WTC11 (cell line): ENCODE measurements at regions of chr14 and their contacts with region 1.

Region 1: GRCh38 chr14:93115069-93115820 is 480 bp downstream of the ITPK1 start:
- DNase-seq: peak; percentile 75
- ATAC-seq: peak; percentile 73
- H3K4me3 Mint-ChIP-seq: peak overlapping the region; percentile 86
- H3K27ac Mint-ChIP-seq: no peak overlapping the region
- H3K4me1 Mint-ChIP-seq: peaks cover 40% of the 10 kb centered on the region
- H3K27me3 Mint-ChIP-seq: no peaks in the 10 kb centered on the region; the same call in 1 of the 2 replicates
- CTCF ChIP-seq: no peak

Region 2: DNA sequence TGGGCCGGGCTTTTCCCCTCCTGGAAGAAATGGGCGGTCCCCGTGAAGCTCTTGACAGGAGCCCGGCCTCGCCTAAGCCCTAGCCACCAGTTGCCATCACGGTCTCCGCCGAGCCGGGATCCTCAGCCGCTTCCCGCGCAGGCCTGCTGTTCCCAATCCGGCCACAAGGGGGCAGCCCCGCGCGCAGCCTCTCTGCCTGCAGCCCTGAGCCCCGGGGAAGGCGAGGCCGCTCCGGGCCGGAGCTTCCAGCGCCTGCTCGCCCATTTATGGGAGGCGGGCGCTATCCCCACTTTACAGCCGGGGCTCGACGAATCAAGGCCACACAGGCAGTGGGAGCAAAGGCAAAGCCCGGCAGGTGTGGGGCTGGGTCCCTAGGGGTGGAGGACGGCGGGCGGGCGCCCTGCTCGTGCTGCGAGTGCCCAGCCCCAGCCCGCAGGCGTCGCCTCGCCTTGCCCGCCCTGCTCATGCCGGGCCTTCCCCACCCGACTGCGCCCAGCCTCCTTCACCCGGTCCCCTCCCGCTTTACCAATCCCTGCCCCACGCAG is 428.3 kb before region 1 on chr14:
- CTCF ChIA-PET with region 1: interaction called, 13 read pairs
- POLR2A ChIA-PET with region 1: no interaction called
- DNase-seq: peak; percentile 94
- ATAC-seq: peak; percentile 83
- H3K4me3 Mint-ChIP-seq: peak overlapping the region; percentile 45
- H3K27ac Mint-ChIP-seq: no peak overlapping the region
- H3K4me1 Mint-ChIP-seq: no peaks in the 10 kb centered on the region
- H3K27me3 Mint-ChIP-seq: peaks cover 25% of the 10 kb centered on the region
- CTCF ChIP-seq: peak; percentile 99

Region 3: GRCh38 chr14:93023039-93023438 is 92.2 kb before region 1 on chr14:
- CTCF ChIA-PET with region 1: interaction called, 13 read pairs
- POLR2A ChIA-PET with region 1: no interaction called
- DNase-seq: no peak
- ATAC-seq: peak; percentile 73
- H3K4me3 Mint-ChIP-seq: no peak overlapping the region
- H3K27ac Mint-ChIP-seq: no peak overlapping the region
- H3K4me1 Mint-ChIP-seq: peaks cover 67% of the 10 kb centered on the region
- H3K27me3 Mint-ChIP-seq: no peaks in the 10 kb centered on the region
- CTCF ChIP-seq: no peak

Region 4: DNA sequence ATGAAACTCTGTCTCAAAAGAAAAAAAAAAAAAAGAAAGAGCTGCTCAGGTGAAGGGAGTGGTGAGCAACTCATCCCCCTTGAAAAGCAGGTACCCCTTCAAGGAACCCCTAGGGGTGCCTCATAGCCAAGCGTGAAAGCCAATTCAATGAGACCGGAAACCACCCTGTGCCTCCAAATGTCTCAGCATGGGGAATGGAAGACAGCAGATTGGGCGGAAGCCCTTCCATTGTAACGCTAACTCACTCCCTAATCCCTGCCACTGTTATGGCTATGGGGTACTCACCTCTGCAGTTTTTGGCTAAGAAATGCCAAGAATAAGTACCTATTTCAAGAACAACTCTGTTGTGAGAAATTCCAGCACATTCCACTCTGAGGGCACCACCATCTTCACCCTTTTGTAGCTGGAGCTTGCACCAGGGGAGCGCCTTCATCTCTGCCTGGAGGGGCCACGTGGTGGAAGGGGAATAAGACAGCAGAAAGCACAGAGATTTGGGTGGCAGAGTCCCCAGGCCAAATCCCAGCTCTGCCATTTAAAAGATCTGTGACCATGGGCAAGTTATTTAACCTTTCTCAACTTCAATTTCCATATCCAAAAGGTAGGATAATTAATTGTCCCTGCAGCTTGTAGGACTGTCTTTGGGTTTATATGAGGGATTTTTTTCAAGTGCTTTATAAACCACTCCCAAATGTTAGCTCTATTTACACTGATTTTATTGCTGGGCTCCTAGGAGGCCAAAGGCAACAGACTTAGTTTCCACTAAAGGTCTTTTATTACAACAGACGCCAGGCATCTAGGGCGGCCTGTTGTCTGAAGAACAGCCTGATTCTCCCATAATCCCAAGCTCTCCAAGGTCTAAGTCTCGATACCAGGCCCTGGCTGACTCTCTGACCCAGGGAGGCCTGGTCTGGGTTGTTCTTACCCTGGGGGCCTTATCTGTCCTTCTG is 63.4 kb before region 1 on chr14:
- CTCF ChIA-PET with region 1: interaction called, 18 read pairs
- POLR2A ChIA-PET with region 1: no interaction called
- DNase-seq: peak; percentile 51
- ATAC-seq: peak; percentile 89
- H3K4me3 Mint-ChIP-seq: no peak overlapping the region
- H3K27ac Mint-ChIP-seq: peak overlapping the region; percentile 95
- H3K4me1 Mint-ChIP-seq: peaks cover 88% of the 10 kb centered on the region
- H3K27me3 Mint-ChIP-seq: no peaks in the 10 kb centered on the region
- CTCF ChIP-seq: no peak

Region 5: GRCh38 chr14:93132470-93133065 is 17.3 kb after region 1 on chr14:
- CTCF ChIA-PET with region 1: interaction called, 131 read pairs
- POLR2A ChIA-PET with region 1: interaction called, 3 read pairs
- DNase-seq: no peak
- ATAC-seq: peak; percentile 91
- H3K4me3 Mint-ChIP-seq: no peak overlapping the region
- H3K27ac Mint-ChIP-seq: peak overlapping the region; percentile 93
- H3K4me1 Mint-ChIP-seq: peaks cover 2% of the 10 kb centered on the region; the same call in 1 of the 2 replicates
- H3K27me3 Mint-ChIP-seq: no peaks in the 10 kb centered on the region
- CTCF ChIP-seq: no peak

Region 6: DNA sequence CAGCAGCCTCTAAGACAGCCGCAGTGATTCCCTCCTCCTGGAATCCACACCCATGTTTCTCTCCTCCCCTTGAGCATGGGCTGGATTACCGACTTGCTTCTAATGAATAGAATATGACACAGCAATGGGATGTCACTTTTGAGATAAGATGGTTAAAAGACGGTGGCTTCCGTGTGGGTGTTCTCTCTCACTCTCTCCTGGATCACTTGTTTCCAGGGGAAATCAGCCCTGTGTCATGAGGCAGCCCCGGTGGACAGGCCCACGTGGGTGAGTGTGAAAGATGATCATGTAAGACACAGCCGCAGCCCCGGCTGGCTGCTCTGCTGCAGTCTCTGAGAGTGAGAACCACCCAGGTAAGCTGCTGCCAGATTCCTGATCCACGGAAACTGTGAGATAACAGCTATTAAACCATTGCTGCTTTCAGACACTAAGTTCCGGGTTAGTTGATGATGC is 58.7 kb after region 1 on chr14:
- CTCF ChIA-PET with region 1: interaction called, 24 read pairs
- POLR2A ChIA-PET with region 1: no interaction called
- DNase-seq: no peak
- ATAC-seq: no peak
- H3K4me3 Mint-ChIP-seq: no peak overlapping the region
- H3K27ac Mint-ChIP-seq: no peak overlapping the region
- H3K4me1 Mint-ChIP-seq: no peaks in the 10 kb centered on the region
- H3K27me3 Mint-ChIP-seq: no peaks in the 10 kb centered on the region
- CTCF ChIP-seq: no peak

Region 7: GRCh38 chr14:93402708-93403350 is 287.6 kb after region 1 on chr14:
- CTCF ChIA-PET with region 1: no interaction called
- POLR2A ChIA-PET with region 1: no interaction called
- DNase-seq: no peak
- ATAC-seq: no peak; the same call in 1 of the 2 replicates
- H3K4me3 Mint-ChIP-seq: peak overlapping the region; percentile 5
- H3K27ac Mint-ChIP-seq: peak overlapping the region; percentile 52
- H3K4me1 Mint-ChIP-seq: peaks cover 23% of the 10 kb centered on the region
- H3K27me3 Mint-ChIP-seq: no peaks in the 10 kb centered on the region; the same call in 1 of the 2 replicates
- CTCF ChIP-seq: no peak